Mammary epithelial cell (primary cell): ENCODE measurements at regions of chr2 and their contacts with region 1.

Region 1: DNA sequence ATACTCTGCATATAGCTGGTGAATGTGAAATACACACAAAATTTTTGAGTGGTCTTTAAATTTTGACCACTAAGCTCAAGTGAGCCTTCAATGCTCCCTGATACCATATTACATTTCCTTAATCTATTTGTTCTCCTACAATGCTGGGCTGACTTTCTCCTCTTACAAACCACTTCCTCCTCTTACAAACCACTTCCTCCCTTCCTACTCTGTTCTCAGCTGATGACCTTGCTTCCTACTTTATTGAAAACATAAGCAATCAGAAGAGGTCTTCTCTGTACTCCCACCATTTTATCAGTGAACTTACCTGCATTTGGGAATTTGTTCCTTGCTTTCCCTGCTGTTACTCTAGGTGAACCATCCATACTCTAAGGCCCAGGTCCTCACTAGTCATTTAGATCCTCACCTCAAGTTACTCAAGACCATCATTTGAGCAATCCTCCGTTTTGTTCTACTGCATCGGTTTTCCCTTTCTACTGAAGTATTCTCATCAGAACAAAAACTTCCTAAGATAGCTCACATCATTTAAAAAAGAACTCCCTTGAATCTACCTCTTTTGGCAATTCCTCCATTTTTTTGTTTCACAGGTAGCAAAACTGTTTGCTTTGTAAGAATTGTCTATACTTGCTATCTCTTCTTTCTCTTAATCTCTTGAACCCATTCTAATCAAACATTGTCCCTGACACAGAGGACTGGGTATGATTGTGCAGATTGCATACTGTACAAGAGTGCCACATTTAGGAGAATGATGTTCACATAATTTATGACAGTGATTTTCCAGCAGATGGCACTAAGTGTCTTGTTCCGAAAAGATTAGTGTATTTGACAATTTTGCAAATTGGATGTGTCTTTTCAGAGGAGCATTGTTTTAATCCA is 96.5 kb downstream of the EPB41L5 start:
- DNase-seq: peak; percentile 36
- H3K4me3 ChIP-seq: no peak overlapping the region
- H3K27ac ChIP-seq: peak overlapping the region; percentile 50
- H3K4me1 ChIP-seq: peaks cover 26% of the 10 kb centered on the region
- H3K27me3 ChIP-seq: no peaks in the 10 kb centered on the region
- CTCF ChIP-seq: peak; percentile 48 to 54

Region 2: GRCh38 chr2:119702918-119703401 is 406.5 kb before region 1 on chr2:
- CTCF ChIA-PET with region 1: no interaction called
- dilution Hi-C with region 1: no loop called
- in situ Hi-C with region 1: no loop called
- intact Hi-C with region 1: loop called (anchors 2 kb)
- DNase-seq: peak; percentile 44
- H3K4me3 ChIP-seq: no peak overlapping the region
- H3K27ac ChIP-seq: no peak overlapping the region
- H3K4me1 ChIP-seq: no peaks in the 10 kb centered on the region
- H3K27me3 ChIP-seq: no peaks in the 10 kb centered on the region
- CTCF ChIP-seq: peak; percentile 90 to 99

Region 3: DNA sequence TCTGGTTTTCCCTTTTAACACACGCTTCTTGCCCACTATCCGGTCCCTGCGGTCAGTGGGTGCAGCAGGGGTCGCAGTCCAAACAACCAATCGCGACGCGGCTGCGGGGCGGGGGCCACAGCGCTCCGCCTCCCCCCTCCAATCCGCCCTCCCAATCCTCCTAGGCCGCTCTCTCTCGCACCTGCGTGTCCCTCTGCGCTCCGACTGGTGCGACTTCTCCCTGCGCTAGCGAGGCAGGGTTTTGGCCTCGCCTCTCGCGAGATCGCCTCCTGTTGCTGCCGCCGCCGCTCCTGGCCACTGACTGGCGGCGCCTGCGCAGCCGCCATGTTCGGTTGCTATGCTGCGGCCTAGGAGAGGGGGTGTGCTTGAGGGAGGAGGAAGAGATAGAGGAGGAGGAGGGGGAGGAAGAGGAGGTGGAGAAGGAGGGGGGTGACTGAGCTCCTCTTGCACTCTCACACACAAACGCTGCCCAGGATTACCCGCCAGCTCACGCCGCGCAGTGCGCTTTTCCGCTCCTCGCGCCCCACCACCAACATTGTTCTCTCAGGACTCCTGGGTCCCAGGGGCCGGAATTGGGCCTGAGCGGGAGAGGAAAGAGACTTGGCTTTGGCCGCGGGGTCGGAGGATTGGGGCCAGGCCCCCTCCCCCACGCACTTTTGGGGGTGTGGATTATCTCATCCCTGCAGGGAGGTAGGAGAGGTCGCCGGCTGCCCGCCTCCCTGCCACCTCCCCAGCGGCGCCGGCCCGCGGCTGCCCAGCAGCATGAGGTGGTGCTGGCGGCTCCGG is 349.8 kb before region 1 on chr2 and contains the start of gene PTPN4:
- CTCF ChIA-PET with region 1: no interaction called
- dilution Hi-C with region 1: no loop called
- in situ Hi-C with region 1: no loop called
- intact Hi-C with region 1: loop called (anchors 2 kb)
- DNase-seq: peak; percentile 99
- H3K4me3 ChIP-seq: peak within 1 kb of the TSS; percentile 63 to 85 (median 83)
- H3K27ac ChIP-seq: peak within 1 kb of the TSS; percentile 77
- H3K4me1 ChIP-seq: peaks cover 17% of the 10 kb centered on the region
- H3K27me3 ChIP-seq: no peaks in the 10 kb centered on the region
- CTCF ChIP-seq: no peak
- total RNA-seq, gene PTPN4: 36.9 to 48.7 TPM

Region 4: GRCh38 chr2:120012771-120013596 is 96.4 kb before region 1 on chr2 and contains the start of gene EPB41L5:
- CTCF ChIA-PET with region 1: no interaction called
- dilution Hi-C with region 1: no loop called
- in situ Hi-C with region 1: no loop called
- intact Hi-C with region 1: loop called (anchors 5 kb)
- DNase-seq: peak; percentile 94
- H3K4me3 ChIP-seq: peak within 1 kb of the TSS; percentile 67 to 96 (median 68)
- H3K27ac ChIP-seq: peak within 1 kb of the TSS; percentile 80
- H3K4me1 ChIP-seq: peaks cover 10% of the 10 kb centered on the region
- H3K27me3 ChIP-seq: no peaks in the 10 kb centered on the region
- CTCF ChIP-seq: peak in 1 of 2 donors; percentile 6
- total RNA-seq, gene EPB41L5: 16.5 to 18.8 TPM

Region 5: GRCh38 chr2:120167272-120167671 is 57.8 kb after region 1 on chr2:
- CTCF ChIA-PET with region 1: no interaction called
- dilution Hi-C with region 1: loop called (anchors 5 kb)
- in situ Hi-C with region 1: loop called (anchors 10 kb)
- intact Hi-C with region 1: no loop called
- DNase-seq: no peak
- H3K4me3 ChIP-seq: no peak overlapping the region
- H3K27ac ChIP-seq: no peak overlapping the region
- H3K4me1 ChIP-seq: no peaks in the 10 kb centered on the region
- H3K27me3 ChIP-seq: no peaks in the 10 kb centered on the region
- CTCF ChIP-seq: no peak

Region 6: GRCh38 chr2:120223034-120223912 is 113.8 kb after region 1 on chr2 and contains the start of gene TMEM185B:
- CTCF ChIA-PET with region 1: no interaction called
- dilution Hi-C with region 1: no loop called
- in situ Hi-C with region 1: no loop called
- intact Hi-C with region 1: loop called (anchors 2 kb)
- DNase-seq: peak; percentile 87
- H3K4me3 ChIP-seq: peak within 1 kb of the TSS; percentile 45 to 64 (median 60)
- H3K27ac ChIP-seq: peak within 1 kb of the TSS; percentile 69
- H3K4me1 ChIP-seq: peaks cover 19% of the 10 kb centered on the region
- H3K27me3 ChIP-seq: no peaks in the 10 kb centered on the region
- CTCF ChIP-seq: peak; percentile 20 to 50
- total RNA-seq, gene TMEM185B: 30.2 to 45.7 TPM